ENCODE measurements at regions of chr12 and their contacts with region 1.

Region 1: DNA sequence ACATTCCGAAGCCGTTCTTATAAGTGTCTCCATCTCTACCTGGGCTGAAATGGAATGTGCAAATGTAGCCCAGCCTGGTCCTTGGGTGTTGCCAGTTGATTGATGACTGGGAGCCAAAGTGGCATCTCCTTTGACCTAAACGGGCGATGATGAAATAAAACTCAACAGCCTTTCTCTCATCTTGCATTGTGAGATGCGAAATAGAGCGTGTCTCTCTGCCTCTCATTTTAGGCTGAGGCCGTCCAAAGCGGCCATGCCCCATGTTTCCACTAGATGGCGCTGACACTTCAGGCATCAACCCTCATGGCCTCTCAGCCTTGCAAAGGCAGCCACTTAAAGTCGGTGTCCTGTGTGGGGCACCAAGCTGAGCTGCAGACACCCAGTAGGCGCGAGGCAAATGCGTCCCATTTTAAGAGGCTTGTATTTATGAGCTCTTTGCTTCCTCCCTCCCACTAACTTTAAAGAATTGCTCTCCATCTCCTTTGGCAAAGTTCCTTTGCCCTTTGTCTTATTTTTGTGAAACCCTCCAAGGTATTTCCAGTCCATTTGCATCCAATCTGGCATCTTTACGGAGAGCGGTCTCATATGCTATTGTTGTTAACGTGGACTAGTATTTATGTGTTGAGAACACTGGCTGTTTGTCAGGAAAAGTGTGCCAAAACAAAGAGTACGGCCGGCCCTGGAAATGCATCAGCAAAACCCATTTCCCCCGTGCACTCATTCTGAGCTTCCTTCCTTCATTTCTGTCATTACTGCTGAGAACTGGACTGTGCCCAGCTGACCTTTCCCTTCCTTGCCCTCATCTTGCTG is 25.0 kb downstream of the GPRC5A start:
- DNase-seq: peak; percentile 90
- ATAC-seq: peak; percentile 97

Region 2: DNA sequence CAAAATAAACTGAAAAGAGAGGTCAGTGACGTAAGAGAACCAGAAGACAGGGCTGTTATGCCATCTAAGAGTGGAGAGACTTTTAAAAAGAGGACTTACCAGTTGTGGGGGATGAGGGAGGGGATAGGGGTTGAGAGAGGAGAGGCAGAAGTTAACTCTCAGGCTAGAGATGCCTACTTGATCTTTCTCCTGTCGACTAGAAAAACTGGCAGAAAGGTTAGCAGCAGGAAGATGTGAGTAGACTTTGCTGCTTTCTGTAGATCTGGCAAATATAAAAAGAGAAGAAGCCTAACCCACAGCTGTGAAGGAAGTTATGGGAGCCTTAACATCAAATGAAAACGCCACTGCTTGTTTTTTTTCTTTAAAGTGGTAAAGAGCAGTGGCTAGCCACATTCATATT is 293.9 kb before region 1 on chr12:
- intact Hi-C with region 1: no loop called
- DNase-seq: no peak
- ATAC-seq: no peak

Region 3: GRCh38 chr12:12983420-12984035 is 67.2 kb after region 1 on chr12:
- intact Hi-C with region 1: loop called (anchors 2 kb)
- DNase-seq: no peak
- ATAC-seq: peak; percentile 79

Region 4: DNA sequence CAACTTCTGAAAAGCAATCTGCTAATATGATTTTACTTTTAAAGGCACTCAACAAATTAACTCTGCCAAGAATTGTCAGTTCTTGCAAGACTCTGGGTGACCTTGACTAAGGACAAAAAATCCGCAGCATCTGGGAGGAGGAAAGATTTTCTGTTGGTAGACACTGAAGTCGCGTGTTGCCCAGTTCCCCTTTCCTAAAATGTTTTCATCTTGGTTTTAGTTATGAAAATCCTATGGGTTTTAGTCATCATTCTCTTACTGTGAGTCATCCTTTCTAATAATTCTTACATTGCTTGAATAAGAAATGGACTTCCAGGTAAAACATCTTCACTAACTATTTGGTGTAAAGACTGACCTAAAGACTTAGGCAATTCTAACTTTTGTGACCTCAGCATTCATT is 178.0 kb after region 1 on chr12:
- intact Hi-C with region 1: loop called (anchors 10 kb)
- DNase-seq: no peak
- ATAC-seq: no peak

Region 5: GRCh38 chr12:13211859-13212664 is 295.7 kb after region 1 on chr12:
- intact Hi-C with region 1: loop called (anchors 5 kb)
- DNase-seq: peak; percentile 39
- ATAC-seq: peak; percentile 27

Measured in left ventricle myocardium superior (tissue), 1 donor.